Left cardiac atrium (tissue), 4 donors: ENCODE measurements at regions of chr12 and their contacts with region 1.

Region 1: DNA sequence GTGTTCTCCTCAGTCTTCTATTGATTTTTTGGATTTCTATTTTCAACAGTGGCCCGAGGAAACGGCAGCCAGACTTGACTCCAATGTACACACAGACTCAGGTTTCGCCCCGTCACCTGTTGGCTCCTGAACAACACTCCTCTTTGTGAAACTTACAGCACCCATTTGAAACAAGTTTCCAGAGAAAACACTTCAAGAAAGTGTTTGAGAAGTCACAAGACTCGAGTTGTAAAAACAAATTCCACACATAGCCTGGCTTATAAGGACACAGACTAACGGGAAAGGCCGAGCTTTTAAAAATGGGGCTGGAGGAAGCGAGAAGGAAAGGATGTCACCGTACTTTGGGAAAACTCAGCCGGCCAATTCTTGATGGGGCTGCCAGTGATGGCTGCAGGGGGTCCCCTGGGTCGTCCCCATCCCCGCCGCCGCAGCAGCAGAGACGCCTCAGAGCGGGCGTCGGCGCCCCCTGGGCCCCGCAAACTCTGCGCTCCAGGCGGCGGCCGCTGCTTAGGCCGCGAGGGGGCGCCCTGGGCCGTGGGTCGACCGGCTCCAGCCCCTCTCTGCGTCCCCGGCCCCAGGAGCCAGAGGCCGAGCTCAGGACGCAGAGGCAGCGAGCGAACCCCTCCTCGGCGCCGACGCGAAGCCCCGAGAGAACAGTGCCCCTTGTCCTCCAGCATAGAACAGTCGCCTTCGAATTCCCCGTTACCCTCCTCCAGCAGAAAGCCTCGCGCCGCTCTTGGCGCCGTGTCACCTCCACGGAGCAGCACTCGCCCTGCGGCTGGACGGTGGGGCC is 106.9 kb downstream of the PRICKLE1 start:
- DNase-seq: peak; percentile 84
- ATAC-seq: peak; percentile 92

Region 2: GRCh38 chr12:42568952-42569915 is 86.6 kb after region 1 on chr12:
- intact Hi-C with region 1: loop called (anchors 1 to 5 kb)
- DNase-seq: no peak
- ATAC-seq: peak; percentile 70 to 72

Region 3: GRCh38 chr12:43282106-43282505 is 799.5 kb after region 1 on chr12:
- intact Hi-C with region 1: loop called (anchors 2 to 5 kb)
- DNase-seq: no peak
- ATAC-seq: peak in 1 of 2 donors; percentile 57

Region 4: GRCh38 chr12:43338848-43339526 is 856.3 kb after region 1 on chr12:
- intact Hi-C with region 1: loop called in 1 of 2 experiments (anchors 5 kb)
- DNase-seq: no peak
- ATAC-seq: peak; percentile 95 to 97